CD14-positive monocyte (primary cell): ENCODE measurements at regions of chr16 and their contacts with region 1.

Region 1: GRCh38 chr16:86554917-86555703 is at the start of gene MTHFSD:
- DNase-seq: peak; percentile 89 to 92 (median 92)
- H3K4me3 ChIP-seq: peak within 1 kb of the TSS; percentile 60 to 88 (median 87)
- H3K4me3 Mint-ChIP-seq: peak within 1 kb of the TSS; percentile 85 to 90
- H3K27ac ChIP-seq: peak within 1 kb of the TSS; percentile 70 to 98
- H3K27ac Mint-ChIP-seq: peak within 1 kb of the TSS; percentile 95 to 98 (median 97)
- H3K4me1 ChIP-seq: peaks cover 13 to 17% of the 10 kb centered on the region in 2 donors
- H3K4me1 Mint-ChIP-seq: peaks cover 15% of the 10 kb centered on the region
- H3K27me3 ChIP-seq: peaks cover 0 to 3% of the 10 kb centered on the region in 2 donors
- H3K27me3 Mint-ChIP-seq: peaks cover 3 to 16% (median 13%) of the 10 kb centered on the region in 3 donors
- CTCF ChIP-seq: no peak
- polyA plus RNA-seq, gene MTHFSD: 7.2 to 14.1 (median 11.7) TPM

Region 2: GRCh38 chr16:87316923-87317749 is 762.0 kb after region 1 on chr16 and contains the start of gene C16orf95:
- intact Hi-C with region 1: loop called in 1 of 2 experiments (anchors 5 kb)
- DNase-seq: peak; percentile 89 to 94 (median 92)
- H3K4me3 ChIP-seq: peak within 1 kb of the TSS; percentile 71 to 85 (median 81)
- H3K4me3 Mint-ChIP-seq: peak within 1 kb of the TSS; percentile 98 to 99
- H3K27ac ChIP-seq: peak within 1 kb of the TSS; percentile 80 to 91
- H3K27ac Mint-ChIP-seq: peak within 1 kb of the TSS; percentile 88 to 96 (median 93)
- H3K4me1 ChIP-seq: peaks cover 7 to 11% of the 10 kb centered on the region in 2 donors
- H3K4me1 Mint-ChIP-seq: peaks cover 11% of the 10 kb centered on the region
- H3K27me3 ChIP-seq: no peaks in the 10 kb centered on the region
- H3K27me3 Mint-ChIP-seq: peaks cover 0 to 5% (median 0%) of the 10 kb centered on the region in 3 donors
- CTCF ChIP-seq: peak; percentile 72
- polyA plus RNA-seq, gene C16orf95: 0.89 to 1.9 (median 1.7) TPM